Activated naive CD4-positive, alpha-beta T cell treated with anti-CD3 and anti-CD28 coated beads for 36 hours (primary cell): ENCODE measurements at regions of chr7 and their contacts with region 1.

Region 1: GRCh38 chr7:5396999-5397663 is 26.5 kb downstream of the TNRC18 start:
- DNase-seq: peak; percentile 92
- H3K4me3 Mint-ChIP-seq: peak overlapping the region; percentile 79
- H3K27ac Mint-ChIP-seq: peak overlapping the region; percentile 92
- H3K4me1 Mint-ChIP-seq: peaks cover 32% of the 10 kb centered on the region
- H3K27me3 Mint-ChIP-seq: no peaks in the 10 kb centered on the region

Region 2: GRCh38 chr7:5170251-5170650 is 226.9 kb before region 1 on chr7:
- CTCF ChIA-PET with region 1: no interaction called
- intact Hi-C with region 1: no loop called
- DNase-seq: no peak
- H3K4me3 Mint-ChIP-seq: no peak overlapping the region
- H3K27ac Mint-ChIP-seq: no peak overlapping the region
- H3K4me1 Mint-ChIP-seq: no peaks in the 10 kb centered on the region
- H3K27me3 Mint-ChIP-seq: no peaks in the 10 kb centered on the region

Region 3: DNA sequence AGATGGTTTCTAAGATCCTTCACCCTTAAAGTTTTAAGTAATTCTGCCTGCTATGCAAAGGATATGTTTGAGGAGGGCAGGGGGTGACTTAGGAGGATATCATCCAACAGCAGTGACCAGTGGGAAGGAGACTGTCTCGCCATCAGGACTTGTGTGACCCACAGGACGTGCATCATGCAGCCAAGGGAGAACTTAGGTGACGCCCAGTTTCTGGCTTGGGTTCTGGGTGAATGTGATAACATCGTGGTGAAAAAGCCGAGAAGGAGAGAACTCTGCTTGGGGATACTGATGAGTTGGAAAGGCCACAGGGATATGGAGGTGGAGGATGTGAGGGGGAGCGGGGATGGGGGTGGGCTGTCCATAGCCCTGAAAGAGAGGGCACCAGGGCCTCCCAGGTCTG is 203.3 kb before region 1 on chr7:
- CTCF ChIA-PET with region 1: no interaction called
- intact Hi-C with region 1: loop called (anchors 2 kb)
- DNase-seq: no peak
- H3K4me3 Mint-ChIP-seq: no peak overlapping the region
- H3K27ac Mint-ChIP-seq: no peak overlapping the region
- H3K4me1 Mint-ChIP-seq: peaks cover 26% of the 10 kb centered on the region
- H3K27me3 Mint-ChIP-seq: no peaks in the 10 kb centered on the region

Region 4: DNA sequence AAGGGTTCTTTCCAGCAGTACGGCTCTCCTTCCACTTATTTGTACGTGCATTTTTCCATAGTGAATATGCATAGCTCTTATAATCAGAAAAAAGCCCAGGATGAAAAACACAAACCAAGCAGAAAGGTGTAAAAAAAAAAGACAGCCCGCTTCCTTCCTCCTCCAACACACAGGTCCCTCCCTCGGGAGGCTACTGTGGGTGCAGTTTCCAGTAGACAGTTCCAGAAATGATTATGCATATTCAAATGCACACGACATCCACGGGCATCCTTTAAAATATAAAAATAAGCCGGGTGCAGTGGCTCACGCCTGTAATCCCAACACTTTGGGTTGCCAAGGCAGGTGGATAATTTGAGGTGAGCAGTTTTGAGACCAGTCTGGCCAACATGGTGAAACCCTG is 33.4 kb before region 1 on chr7:
- CTCF ChIA-PET with region 1: interaction called, 12 read pairs
- intact Hi-C with region 1: loop called (anchors 2 kb)
- DNase-seq: peak; percentile 33
- H3K4me3 Mint-ChIP-seq: no peak overlapping the region
- H3K27ac Mint-ChIP-seq: no peak overlapping the region
- H3K4me1 Mint-ChIP-seq: peaks cover 16% of the 10 kb centered on the region
- H3K27me3 Mint-ChIP-seq: no peaks in the 10 kb centered on the region

Region 5: DNA sequence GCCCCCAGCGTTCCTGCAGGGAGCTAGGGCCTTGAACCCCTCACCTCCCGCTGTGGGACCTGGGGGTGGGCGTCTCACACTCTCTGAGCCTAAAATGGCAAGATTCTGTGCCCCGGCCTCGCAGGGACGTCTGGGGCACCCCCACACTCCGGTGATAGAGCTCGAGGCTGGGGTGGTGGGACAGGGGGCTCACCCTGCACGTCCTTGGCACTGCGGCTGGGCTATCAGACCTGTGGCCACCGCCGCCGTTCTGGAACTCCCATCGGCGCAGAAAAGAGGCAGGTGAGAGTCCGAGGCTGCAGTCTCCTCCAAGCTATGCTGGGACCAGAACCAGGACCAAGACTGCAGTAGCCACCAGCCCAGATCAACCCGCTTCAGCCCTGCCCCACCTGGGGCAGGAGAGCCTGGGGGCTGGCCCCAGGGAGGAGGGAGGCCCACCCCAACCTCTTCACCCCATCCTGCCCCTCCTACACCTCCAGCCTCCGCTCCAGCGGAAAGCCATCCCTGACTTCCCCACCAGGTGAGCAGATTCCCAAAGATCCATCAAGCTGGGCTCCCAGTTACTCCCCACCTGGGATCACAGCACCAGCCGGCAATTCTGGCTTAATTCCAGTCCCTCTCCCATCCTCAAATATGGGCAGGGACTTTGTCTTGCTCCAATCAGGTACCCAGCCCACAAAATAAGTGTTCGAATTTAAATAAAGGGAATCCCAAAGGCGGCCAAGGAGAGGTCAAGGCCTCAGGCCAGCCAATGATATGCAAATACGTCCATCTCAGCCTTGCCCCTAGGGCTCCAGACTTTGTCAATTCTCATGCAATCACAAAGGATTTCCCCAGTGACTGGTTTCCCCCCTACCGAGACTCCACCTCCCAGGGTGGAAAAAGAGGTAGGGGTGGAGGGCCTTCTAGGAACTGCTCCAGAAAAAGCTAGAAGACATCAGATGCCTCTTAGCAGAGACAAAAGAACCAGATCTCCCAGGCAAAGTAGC is 10.1 kb after region 1 on chr7:
- CTCF ChIA-PET with region 1: no interaction called
- intact Hi-C with region 1: no loop called
- DNase-seq: no peak
- H3K4me3 Mint-ChIP-seq: no peak overlapping the region
- H3K27ac Mint-ChIP-seq: no peak overlapping the region
- H3K4me1 Mint-ChIP-seq: no peaks in the 10 kb centered on the region
- H3K27me3 Mint-ChIP-seq: peaks cover 5% of the 10 kb centered on the region

Region 6: DNA sequence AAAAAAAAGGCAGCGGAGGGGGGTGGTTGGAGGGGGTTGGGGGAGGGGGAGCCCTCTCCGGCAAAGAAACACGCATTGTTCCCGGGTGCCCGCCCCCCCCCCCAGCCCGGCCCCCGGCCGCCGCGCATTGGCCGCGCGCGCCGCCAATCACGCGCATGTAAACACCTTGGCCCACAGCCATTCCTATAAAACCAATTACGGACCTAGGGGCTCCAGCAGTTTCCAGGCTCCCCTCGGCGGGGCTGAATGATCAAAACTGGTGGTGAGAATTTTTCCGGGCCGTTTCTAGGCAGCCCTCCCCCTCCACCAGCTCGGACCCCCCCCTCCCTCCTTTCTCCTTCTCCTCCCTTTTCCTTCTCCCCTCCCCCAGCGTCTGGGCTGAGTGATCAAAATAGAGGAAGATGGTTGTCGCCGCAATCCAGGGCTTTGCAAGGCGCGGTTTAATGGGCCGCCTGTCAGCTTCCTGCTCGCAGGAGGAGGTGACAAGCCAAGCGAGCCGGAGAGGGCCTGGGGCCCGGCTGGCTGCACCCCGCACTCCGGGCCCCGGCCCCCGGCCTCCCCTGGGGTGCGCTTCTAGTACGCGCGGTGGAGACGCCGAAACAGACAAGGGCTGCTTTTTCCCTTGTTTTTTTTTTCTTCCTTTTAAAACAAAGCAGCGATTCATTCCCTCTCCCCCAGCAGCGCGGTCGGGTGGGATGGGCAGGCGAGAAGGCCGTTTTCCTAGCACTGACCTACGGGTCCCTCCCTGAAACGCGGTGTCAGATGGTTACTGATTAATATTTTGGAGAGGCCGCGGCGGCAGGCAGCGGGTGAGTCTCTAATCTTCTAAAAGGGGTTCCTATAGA is 26.9 kb after region 1 on chr7:
- CTCF ChIA-PET with region 1: interaction called, 8 read pairs
- intact Hi-C with region 1: loop called (anchors 1 kb)
- DNase-seq: peak; percentile 62
- H3K4me3 Mint-ChIP-seq: peak overlapping the region; percentile 67
- H3K27ac Mint-ChIP-seq: peak overlapping the region; percentile 24
- H3K4me1 Mint-ChIP-seq: peaks cover 43% of the 10 kb centered on the region
- H3K27me3 Mint-ChIP-seq: peaks cover 64% of the 10 kb centered on the region

Region 7: DNA sequence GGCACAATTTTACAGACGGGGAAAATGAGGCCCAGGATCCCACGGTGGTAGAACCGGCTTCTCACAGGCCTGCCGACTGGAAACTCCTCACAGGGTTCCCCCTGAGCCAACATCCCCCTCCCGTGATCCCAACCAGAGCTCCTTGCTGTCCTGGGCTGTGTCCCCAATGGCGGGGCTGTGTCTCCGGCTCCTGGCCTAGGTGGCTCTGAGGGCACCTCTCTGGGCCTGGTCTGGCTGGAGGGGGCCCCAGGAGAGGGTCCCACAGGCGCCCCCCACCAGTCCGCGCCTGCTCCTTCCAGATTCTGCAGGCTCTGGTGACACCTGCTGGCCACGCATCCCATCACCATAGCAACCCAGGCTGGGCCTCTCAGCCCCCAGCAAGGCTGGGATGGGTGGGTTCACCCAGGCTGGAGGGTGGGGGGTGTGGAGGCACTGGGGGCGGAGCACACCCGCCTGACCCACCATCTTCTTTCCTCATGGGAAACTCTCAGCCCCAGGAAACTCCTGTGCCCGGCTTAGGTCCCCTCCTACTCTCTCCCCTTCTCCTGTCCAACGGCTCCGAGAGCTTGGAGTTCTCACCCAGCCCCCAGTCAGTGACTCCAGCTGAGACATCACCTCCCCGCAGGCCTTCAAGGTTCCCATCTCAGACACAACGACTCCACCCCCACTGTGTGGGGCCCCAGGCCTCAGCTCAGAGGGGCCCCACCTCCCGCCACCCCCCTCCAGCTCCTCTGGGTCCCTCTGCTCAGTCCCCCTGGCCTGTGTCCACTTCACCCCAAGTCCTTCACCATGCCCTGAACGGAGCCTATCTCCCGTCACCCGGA is 53.6 kb after region 1 on chr7:
- CTCF ChIA-PET with region 1: interaction called, 5 read pairs
- intact Hi-C with region 1: loop called (anchors 1 kb)
- DNase-seq: peak; percentile 55
- H3K4me3 Mint-ChIP-seq: no peak overlapping the region
- H3K27ac Mint-ChIP-seq: no peak overlapping the region
- H3K4me1 Mint-ChIP-seq: no peaks in the 10 kb centered on the region
- H3K27me3 Mint-ChIP-seq: no peaks in the 10 kb centered on the region